Activated naive CD4-positive, alpha-beta T cell treated with anti-CD3 and anti-CD28 coated beads for 36 hours (primary cell): ENCODE measurements at regions of chr2 and their contacts with region 1.

Region 1: DNA sequence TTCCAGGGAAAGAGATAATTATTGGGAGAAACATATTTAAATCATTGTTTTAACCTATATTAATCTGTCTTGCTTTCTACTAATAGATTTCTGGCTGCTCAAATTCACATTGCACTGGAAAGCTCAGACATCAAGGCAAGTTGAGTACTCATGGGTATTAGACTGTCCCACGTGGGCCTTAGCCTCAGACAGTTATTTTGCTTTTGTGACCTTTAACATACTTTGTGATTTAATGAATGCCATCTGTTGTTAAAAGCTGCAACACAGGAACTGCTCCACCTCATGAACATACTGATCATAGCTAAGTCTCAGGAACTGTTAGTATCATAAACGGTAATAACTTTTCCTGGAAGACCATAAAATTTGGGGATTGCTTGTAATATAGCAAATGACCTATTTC is 2.7 kb upstream of the LCT start:
- DNase-seq: no peak
- H3K4me3 Mint-ChIP-seq: no peak overlapping the region
- H3K27ac Mint-ChIP-seq: no peak overlapping the region
- H3K4me1 Mint-ChIP-seq: peaks cover 17% of the 10 kb centered on the region
- H3K27me3 Mint-ChIP-seq: no peaks in the 10 kb centered on the region

Region 2: DNA sequence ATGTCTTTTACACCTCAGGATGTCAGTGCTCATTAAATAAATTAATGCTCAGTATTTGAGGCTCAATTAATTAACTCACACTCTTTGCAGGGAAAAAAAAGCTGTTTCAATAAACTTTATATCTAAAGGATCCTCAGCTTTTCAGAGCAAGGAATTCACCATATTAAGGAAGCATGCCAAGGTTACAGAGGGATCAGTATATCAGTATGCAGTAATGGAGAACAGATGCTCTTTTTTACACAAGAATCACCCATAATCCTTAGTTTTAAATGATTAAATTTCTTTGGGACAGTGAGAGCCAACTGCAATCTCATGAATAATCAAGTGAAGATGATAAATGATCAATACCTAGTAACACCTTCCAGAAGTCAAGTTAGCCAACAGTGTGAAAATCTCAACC is 12.1 kb after region 1 on chr2:
- CTCF ChIA-PET with region 1: interaction called, 3 read pairs
- intact Hi-C with region 1: loop called (anchors 2 kb)
- DNase-seq: no peak
- H3K4me3 Mint-ChIP-seq: no peak overlapping the region
- H3K27ac Mint-ChIP-seq: no peak overlapping the region
- H3K4me1 Mint-ChIP-seq: peaks cover 6% of the 10 kb centered on the region
- H3K27me3 Mint-ChIP-seq: no peaks in the 10 kb centered on the region

Region 3: GRCh38 chr2:135870571-135870970 is 30.9 kb after region 1 on chr2:
- CTCF ChIA-PET with region 1: interaction called, 4 read pairs
- intact Hi-C with region 1: loop called (anchors 5 kb)
- DNase-seq: peak; percentile 29
- H3K4me3 Mint-ChIP-seq: no peak overlapping the region
- H3K27ac Mint-ChIP-seq: no peak overlapping the region
- H3K4me1 Mint-ChIP-seq: peaks cover 53% of the 10 kb centered on the region
- H3K27me3 Mint-ChIP-seq: no peaks in the 10 kb centered on the region

Region 4: GRCh38 chr2:135974036-135974435 is 134.3 kb after region 1 on chr2:
- CTCF ChIA-PET with region 1: no interaction called
- intact Hi-C with region 1: no loop called
- DNase-seq: no peak
- H3K4me3 Mint-ChIP-seq: no peak overlapping the region
- H3K27ac Mint-ChIP-seq: no peak overlapping the region
- H3K4me1 Mint-ChIP-seq: peaks cover 45% of the 10 kb centered on the region
- H3K27me3 Mint-ChIP-seq: no peaks in the 10 kb centered on the region